Ascending aorta (tissue), 2 donors: ENCODE measurements at regions of chr6 and their contacts with region 1.

Region 1: DNA sequence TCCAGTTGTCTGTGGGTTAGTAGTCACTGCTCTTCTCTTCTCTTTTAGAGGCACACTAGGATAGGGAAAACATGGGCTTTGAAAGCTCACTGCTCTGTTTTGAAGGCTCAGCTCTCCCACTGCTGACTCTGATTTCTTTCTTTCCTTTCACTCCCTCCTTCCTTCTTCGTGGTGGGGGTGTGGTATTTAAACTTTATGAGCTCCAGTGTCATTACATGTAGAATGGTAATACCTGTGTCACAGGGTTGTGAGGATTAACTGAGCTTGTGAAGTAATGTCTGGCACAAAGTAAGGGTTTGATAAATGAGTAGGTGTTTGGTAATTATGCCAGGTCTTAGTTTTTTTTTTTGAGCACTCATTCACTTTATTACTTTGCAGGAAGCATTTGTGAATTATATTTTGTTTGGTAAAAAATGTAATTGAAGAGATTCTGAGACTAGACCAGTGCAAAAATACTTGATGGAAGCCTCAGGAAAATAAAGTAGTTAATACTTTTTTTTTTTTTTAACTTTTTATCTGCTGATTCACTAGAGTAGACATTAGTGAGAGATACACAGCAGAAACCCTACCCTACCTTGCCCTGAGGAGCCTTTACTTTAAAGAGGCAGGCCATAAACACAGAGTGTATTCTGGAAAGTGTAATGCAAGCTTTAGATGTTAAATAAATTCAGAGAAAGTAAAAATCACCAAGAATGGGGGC is 17.3 kb downstream of the SMAP1 start:
- DNase-seq: no peak
- H3K4me3 ChIP-seq: no peak overlapping the region
- H3K27ac ChIP-seq: no peak overlapping the region
- H3K4me1 ChIP-seq: peaks cover 5% of the 10 kb centered on the region in 2 donors
- H3K27me3 ChIP-seq: no peaks in the 10 kb centered on the region
- CTCF ChIP-seq: no peak

Region 2: DNA sequence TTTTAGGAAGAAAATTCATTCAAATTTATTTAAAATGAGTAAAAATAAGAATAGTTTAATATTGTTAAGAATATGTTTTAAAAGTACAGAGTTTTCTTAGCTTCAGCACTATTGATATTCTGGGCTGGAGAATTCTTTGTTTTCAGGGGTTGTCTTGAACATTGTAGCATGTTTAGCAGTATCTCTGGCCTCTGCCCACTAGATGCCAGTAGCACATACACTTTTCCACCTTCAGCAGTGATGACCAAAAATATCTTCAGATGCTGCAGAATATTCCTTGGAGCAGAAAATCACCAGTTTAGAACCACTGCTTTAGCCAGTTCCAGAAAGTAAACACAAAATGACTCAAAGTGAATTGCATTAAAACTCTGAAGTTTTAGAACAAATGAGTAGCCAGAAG is 137.6 kb before region 1 on chr6:
- intact Hi-C with region 1: loop called (anchors 1 kb)
- DNase-seq: no peak
- H3K4me3 ChIP-seq: no peak overlapping the region
- H3K27ac ChIP-seq: no peak overlapping the region
- H3K4me1 ChIP-seq: no peaks in the 10 kb centered on the region
- H3K27me3 ChIP-seq: no peaks in the 10 kb centered on the region
- CTCF ChIP-seq: peak in 2 of 3 experiments; percentile 34 to 36

Region 3: GRCh38 chr6:70599187-70599586 is 85.8 kb before region 1 on chr6:
- intact Hi-C with region 1: no loop called
- DNase-seq: no peak
- H3K4me3 ChIP-seq: no peak overlapping the region
- H3K27ac ChIP-seq: no peak overlapping the region
- H3K4me1 ChIP-seq: no peaks in the 10 kb centered on the region
- H3K27me3 ChIP-seq: no peaks in the 10 kb centered on the region
- CTCF ChIP-seq: no peak

Region 4: GRCh38 chr6:70725817-70726415 is 41.0 kb after region 1 on chr6:
- intact Hi-C with region 1: no loop called
- DNase-seq: no peak
- H3K4me3 ChIP-seq: no peak overlapping the region
- H3K27ac ChIP-seq: no peak overlapping the region
- H3K4me1 ChIP-seq: no peaks in the 10 kb centered on the region
- H3K27me3 ChIP-seq: no peaks in the 10 kb centered on the region
- CTCF ChIP-seq: no peak